Esophagus muscularis mucosa (tissue), 4 donors: ENCODE measurements at regions of chr3 and their contacts with region 1.

Region 1: DNA sequence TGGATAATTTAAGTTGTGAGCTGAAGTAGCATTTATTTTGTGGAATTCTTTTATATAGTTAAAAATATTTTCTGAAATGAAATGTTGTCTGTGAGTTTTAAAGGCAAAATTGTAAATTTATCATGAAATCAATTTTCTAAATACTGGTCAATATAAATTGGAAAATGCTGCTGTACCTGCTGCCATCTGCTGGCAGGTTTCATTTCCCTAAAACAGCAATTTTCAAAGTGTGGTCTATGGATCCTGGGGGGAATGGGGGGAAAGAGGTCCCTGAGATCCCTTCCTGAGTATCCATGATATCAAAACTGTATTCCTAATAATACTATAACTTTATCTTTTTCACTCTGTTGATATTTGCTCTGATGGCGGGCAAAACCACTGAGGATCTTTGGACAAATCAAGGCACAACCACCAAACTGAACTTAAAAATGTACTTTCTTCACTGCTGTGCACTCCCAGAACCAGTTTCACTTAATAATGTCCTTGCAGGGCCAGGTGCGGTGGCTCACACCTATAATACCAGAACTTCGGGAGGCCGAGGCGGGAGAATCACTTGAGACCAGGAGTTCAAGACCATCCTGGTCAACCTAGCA is 17.2 kb upstream of the CCR4 start:
- DNase-seq: no peak
- H3K4me3 ChIP-seq: no peak overlapping the region
- H3K27ac ChIP-seq: no peak overlapping the region
- H3K4me1 ChIP-seq: no peaks in the 10 kb centered on the region
- H3K27me3 ChIP-seq: no peaks in the 10 kb centered on the region
- CTCF ChIP-seq: peak; percentile 42 to 70 (median 64)
- EP300 ChIP-seq: no peak
- POLR2A ChIP-seq: no peak

Region 2: DNA sequence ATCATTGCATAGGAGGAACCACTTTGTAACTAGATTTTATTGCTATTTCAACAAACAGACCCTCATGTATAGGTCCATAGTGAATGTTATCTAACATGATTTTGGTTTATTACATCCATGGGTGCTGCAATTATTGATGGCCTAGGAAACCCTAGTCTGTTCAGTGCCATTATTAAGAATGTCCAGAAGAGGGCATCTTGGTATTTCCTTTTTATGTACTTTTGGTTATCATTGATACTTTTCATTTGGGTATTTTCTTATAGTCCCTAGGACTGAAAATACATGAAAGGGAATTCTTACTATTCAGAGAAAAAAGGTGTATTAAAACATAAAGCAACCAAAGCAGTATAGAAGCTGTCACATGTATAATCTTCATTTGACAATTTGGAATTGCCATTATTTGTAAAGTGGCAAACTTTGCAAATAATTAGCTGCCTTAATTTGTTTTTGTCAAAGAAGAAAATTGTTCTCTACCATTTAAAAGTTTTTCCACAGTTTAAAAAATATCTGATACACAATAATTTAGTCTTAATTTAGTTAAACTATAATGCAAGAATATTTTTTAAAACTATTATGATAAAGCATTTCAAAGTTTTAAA is 200.5 kb before region 1 on chr3:
- intact Hi-C with region 1: loop called (anchors 5 kb)
- DNase-seq: no peak
- H3K4me3 ChIP-seq: no peak overlapping the region
- H3K27ac ChIP-seq: no peak overlapping the region
- H3K4me1 ChIP-seq: no peaks in the 10 kb centered on the region
- H3K27me3 ChIP-seq: no peaks in the 10 kb centered on the region
- CTCF ChIP-seq: peak in 2 of 3 experiments; percentile 38 to 50
- EP300 ChIP-seq: no peak
- POLR2A ChIP-seq: no peak

Region 3: DNA sequence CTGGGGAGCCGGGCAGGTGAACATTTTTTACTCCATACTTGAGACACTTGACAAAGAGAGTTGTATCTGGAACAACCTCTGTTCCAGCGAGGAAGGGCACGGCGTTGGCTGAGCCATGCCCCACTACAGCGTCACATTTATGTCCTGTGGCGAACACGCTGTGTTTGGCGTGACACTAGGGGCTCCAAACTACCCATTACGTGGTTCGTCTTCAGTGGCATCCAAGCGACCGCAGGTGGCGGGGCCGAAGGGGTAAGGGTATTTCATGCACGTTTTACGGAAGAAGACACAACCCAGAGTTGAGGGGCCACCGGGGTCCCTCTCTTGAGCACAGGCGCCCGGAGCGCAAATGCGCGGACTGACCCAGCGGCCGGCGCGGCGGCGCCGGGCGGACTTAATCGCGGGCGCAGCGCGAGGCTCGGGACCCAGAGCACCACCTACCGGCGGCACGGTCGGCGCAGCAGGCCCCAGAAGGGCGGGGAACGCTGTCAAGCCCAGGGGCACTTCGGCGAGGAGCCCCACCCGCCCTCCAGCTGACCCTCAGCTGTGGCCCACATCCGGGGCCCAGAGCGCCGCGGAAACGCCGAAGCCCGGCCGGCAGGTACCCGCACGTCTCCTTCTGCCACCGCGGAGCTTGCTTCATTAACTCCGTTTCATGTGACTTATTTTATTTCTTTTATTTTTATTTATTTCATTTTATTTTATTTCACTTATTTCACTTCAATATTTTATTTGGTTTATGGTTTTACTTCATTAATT is 152.9 kb before region 1 on chr3:
- intact Hi-C with region 1: loop called (anchors 2 kb)
- DNase-seq: no peak
- H3K4me3 ChIP-seq: peak overlapping the region; percentile 55 to 62 (median 60)
- H3K27ac ChIP-seq: no peak overlapping the region
- H3K4me1 ChIP-seq: peaks cover 7 to 15% (median 15%) of the 10 kb centered on the region in 4 donors
- H3K27me3 ChIP-seq: peaks cover 0 to 11% (median 0%) of the 10 kb centered on the region in 4 donors
- CTCF ChIP-seq: peak; percentile 49 to 89 (median 69)
- EP300 ChIP-seq: no peak
- POLR2A ChIP-seq: no peak